A549 (cell line): ENCODE measurements at regions of chr20 and their contacts with region 1.

Region 1: DNA sequence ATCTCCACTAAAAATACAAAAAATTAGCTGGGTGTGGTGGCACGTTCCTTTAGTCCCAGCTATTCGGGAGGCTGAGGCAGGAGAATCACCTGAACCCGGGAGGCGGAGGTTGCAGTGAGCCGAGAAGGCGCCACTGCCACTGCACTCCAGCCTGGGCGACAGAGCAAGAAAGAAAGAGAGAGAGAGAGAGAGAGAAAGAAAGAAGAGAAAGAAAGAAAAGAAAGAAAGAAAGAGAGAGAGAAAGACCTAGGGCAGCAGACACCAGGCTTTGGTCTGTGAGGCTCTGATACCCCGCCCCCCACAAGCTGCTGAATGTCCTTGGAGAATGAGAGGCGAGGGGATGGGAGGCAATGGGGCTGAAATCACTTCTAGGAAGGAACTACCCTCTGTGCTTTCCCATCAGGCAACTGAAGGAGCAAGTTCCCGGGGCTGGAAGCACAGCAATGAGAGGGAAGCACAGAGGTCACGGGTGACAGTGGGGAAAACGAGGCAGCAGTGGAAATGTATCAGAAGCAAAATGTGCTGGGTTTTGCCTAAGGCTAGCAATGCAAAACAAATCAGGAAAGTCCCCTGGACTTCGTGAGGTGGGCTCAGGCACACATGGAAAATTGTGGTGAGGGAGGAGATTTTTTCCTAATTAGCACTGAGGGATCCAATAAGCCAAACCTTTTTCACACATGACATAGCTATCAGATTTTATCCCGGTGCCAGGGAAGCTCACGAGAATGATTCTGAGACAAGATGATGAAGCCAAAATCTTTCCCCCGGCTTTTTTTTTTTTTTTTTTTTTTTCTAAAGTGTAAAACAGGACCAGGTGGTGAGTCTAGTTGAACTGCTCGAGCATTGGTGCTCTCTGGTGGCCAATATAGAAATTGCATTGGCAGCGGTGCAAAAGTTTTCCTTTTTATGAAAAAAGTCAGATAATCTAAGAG is 16.9 kb upstream of the ARFGEF2 start:
- DNase-seq: peak; percentile 66 to 70
- ATAC-seq: peak; percentile 52 to 78; a peak in 5 of 6 replicates
- H3K4me3 ChIP-seq: no peak overlapping the region
- H3K27ac ChIP-seq: peak overlapping the region; percentile 31 to 52; a peak in 3 of 6 replicates
- H3K4me1 ChIP-seq: peaks cover 8% of the 10 kb centered on the region
- CTCF ChIP-seq: peak; percentile 93
- EP300 ChIP-seq: no peak
- POLR2A ChIP-seq: no peak
- RAD21 ChIP-seq: peak; percentile 94 to 96

Region 2: DNA sequence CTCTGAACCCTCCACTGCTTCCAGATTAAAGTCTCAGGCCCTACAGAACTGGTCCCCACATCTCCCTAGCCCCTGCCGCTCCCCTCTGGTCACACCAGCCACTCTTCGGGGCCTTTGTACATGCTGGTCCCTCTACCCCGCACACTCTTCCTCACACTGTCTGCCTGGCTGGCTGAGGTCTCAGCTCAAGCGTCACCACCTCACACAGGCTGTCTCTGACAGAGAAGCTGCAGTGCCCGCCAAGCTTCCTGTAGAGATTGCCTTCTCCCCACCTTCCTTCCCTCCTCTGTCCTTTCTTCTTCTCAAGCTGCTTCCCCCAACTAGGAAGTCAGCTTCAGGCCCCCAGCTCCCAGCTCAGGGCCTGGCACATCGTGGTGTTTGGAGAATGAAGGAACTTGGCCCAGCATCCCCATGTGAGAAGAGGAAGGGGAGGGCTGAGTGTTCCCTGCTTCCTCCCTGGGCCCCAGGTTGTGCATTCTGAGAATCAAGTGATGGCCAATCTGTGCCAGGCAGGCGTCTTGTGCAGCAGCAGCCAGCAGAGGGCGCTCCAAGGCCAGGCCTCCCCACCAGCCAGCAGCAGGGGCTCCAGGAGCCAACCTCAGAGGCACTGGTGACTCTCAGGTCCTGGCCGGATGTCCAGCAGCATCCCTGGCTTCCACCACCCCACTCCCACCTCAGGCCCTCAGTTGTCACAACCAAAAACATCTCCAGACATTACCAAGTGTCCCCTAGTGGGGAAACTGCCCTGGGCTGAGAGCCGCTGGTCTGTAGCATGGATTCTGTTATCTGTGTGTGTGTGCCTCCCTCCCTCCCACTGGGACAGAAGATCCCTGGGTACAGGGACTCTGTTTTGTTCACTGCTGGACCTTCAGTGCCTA is 269.0 kb before region 1 on chr20:
- CTCF ChIA-PET with region 1: interaction called, 23 read pairs
- POLR2A ChIA-PET with region 1: no interaction called
- DNase-seq: peak; percentile 54 to 73
- ATAC-seq: peak; percentile 80 to 95
- H3K4me3 ChIP-seq: no peak overlapping the region
- H3K27ac ChIP-seq: no peak overlapping the region
- H3K4me1 ChIP-seq: no peaks in the 10 kb centered on the region
- CTCF ChIP-seq: peak; percentile 64
- EP300 ChIP-seq: no peak
- POLR2A ChIP-seq: no peak
- RAD21 ChIP-seq: peak; percentile 77 to 82

Region 3: DNA sequence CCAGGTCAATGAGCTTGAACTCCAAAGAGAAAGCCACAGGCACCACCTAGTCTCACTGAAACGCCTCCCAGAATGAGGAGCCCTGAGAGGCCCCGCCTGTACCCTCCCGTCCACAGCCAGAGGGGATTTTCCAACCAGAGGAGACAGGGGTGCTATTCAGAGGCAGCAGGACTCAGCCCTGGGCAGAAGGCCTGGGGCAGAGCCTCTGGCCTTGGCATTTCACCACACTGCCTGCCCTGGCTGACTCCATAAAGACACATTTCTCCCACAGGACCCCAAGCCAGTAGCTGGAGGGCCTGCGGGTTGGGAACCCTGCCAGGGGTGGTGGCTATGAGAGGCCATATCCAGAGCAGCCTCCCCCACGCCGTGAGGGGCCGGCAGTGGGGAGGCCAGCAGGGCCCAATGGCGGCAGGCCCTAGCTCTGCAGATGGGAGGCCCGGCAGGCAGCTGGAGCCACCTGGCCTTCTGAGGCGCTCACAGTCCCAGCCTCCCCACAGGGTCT is 236.1 kb before region 1 on chr20:
- CTCF ChIA-PET with region 1: interaction called, 494 read pairs
- POLR2A ChIA-PET with region 1: no interaction called
- DNase-seq: no peak
- ATAC-seq: no peak
- H3K4me3 ChIP-seq: no peak overlapping the region
- H3K27ac ChIP-seq: no peak overlapping the region
- H3K4me1 ChIP-seq: no peaks in the 10 kb centered on the region
- CTCF ChIP-seq: no peak
- EP300 ChIP-seq: no peak
- POLR2A ChIP-seq: no peak
- RAD21 ChIP-seq: no peak

Region 4: GRCh38 chr20:48779435-48780058 is 125.1 kb before region 1 on chr20:
- CTCF ChIA-PET with region 1: interaction called, 10 read pairs
- POLR2A ChIA-PET with region 1: no interaction called
- DNase-seq: no peak
- ATAC-seq: no peak
- H3K4me3 ChIP-seq: no peak overlapping the region
- H3K27ac ChIP-seq: no peak overlapping the region
- H3K4me1 ChIP-seq: no peaks in the 10 kb centered on the region
- CTCF ChIP-seq: no peak
- EP300 ChIP-seq: no peak
- POLR2A ChIP-seq: no peak
- RAD21 ChIP-seq: no peak

Region 5: DNA sequence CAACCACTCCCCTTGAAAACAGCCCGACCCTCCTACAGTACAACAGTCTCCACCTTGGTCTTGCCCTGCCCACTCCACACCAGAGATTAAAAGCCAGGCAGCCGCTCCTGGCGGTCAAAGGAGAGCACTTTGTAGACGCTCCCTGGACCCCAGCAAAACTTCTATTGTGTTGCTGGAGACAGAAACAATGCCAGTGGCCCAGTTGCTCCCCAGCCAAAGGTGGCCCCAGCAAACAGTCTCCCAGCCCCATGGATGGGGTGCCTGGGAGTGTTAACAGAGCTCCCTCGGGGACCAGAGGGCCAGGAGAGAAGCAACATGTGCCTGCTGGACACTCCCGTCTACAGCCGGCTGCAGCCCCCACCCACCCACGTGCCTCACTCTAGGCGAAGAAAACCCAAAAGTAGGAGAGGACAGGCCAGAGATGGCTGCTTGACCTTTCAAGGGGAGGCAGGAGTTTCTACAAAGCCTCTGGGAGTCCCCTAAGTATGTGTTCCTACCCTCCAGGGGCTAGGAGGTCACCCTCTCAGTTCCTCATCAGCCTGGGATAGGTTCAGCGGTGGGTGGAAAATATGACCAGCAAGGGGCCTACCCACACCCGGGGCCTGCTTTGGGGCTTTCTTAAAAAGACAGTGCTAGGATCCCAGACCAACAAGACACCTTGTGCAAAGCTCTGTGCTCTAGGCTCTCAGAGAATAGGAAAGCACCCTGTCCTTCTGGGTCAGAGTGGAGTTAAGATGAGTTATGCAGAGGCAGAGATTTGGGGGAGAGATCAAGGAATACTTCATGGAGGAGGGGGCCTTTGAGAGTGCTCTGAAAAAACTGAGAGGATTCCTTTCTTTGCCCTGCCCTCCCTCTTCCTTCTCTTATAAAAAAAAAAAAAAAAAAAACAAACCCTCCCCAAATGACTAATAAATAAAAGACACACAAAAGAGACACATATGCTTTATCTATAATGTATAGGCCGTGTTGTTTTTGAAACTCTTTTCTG is 57.8 kb before region 1 on chr20:
- CTCF ChIA-PET with region 1: interaction called, 12 read pairs
- POLR2A ChIA-PET with region 1: no interaction called
- DNase-seq: peak in 1 of 2 experiments; percentile 54
- ATAC-seq: peak; percentile 54 to 76; a peak in 5 of 6 replicates
- H3K4me3 ChIP-seq: no peak overlapping the region
- H3K27ac ChIP-seq: peak overlapping the region; percentile 63 to 82
- H3K4me1 ChIP-seq: peaks cover 49% of the 10 kb centered on the region
- CTCF ChIP-seq: no peak
- EP300 ChIP-seq: no peak
- POLR2A ChIP-seq: no peak
- RAD21 ChIP-seq: 0 out of 5 replicates have a peak, but pooled peaks of 1 of the 2 experiments have one; percentile 8

Region 6: GRCh38 chr20:48921151-48921898 is 16.7 kb after region 1 on chr20 and contains the start of gene ARFGEF2:
- CTCF ChIA-PET with region 1: interaction called, 21 read pairs
- POLR2A ChIA-PET with region 1: interaction called, 3 read pairs
- DNase-seq: peak; percentile 91 to 92
- ATAC-seq: peak; percentile 90 to 94
- H3K4me3 ChIP-seq: peak within 1 kb of the TSS; percentile 89
- H3K27ac ChIP-seq: peak within 1 kb of the TSS; percentile 96 to 98
- H3K4me1 ChIP-seq: peaks cover 22% of the 10 kb centered on the region
- CTCF ChIP-seq: no peak
- EP300 ChIP-seq: no peak
- POLR2A ChIP-seq: peak; percentile 88
- RAD21 ChIP-seq: no peak
- polyA plus RNA-seq, gene ARFGEF2: 24.3 and 27.8 TPM in 2 replicates

Region 7: GRCh38 chr20:49006446-49006980 is 101.9 kb after region 1 on chr20:
- CTCF ChIA-PET with region 1: no interaction called
- POLR2A ChIA-PET with region 1: no interaction called
- DNase-seq: no peak
- ATAC-seq: peak in 1 of 2 experiments; percentile 24; a peak in 1 of 6 replicates
- H3K4me3 ChIP-seq: no peak overlapping the region
- H3K27ac ChIP-seq: no peak overlapping the region
- H3K4me1 ChIP-seq: no peaks in the 10 kb centered on the region
- CTCF ChIP-seq: no peak
- EP300 ChIP-seq: no peak
- POLR2A ChIP-seq: no peak
- RAD21 ChIP-seq: no peak